Naive thymus-derived CD4-positive, alpha-beta T cell (primary cell): ENCODE measurements at regions of chr2 and their contacts with region 1.

Region 1: DNA sequence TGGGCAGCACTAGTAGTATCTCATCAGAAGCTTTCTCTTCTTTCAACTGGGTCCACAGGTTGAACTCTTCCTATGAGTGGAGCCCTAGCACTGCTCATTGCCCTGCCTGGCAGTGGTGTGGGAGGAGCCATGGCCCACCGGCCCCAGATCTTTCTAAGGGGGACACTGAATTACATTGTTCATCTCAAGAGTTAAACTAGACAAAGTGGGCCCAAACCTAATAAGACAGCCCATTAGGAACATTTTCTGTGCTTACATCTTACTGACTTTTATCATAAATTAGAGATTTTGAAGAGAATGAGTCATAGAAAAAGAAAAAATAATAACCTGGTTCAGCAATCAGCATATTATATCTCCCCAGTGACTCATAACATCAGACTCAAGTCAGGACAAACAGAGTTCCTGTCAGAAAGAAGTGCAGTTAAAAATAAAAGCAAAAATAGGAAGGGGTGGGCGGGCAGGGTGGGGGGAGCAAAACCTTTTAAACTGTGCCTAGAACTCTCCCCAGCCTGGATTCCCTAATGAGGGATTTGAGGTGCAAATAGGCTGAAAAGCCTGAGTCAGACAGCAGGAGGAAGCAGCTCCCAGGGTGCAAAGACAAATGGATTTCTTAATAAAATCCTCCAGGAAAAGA is 161.6 kb upstream of the TRIB2 start:
- DNase-seq: peak in 1 of 9 donors; percentile 32
- ATAC-seq: peak; percentile 27
- H3K4me3 ChIP-seq: no peak overlapping the region
- H3K4me3 Mint-ChIP-seq: peak overlapping the region in 7 of 10 donors; percentile 5 to 66 (median 26)
- H3K27ac ChIP-seq: no peak overlapping the region
- H3K27ac Mint-ChIP-seq: peak overlapping the region in 8 of 9 donors; percentile 36 to 89 (median 74)
- H3K4me1 ChIP-seq: peaks cover 8 to 26% of the 10 kb centered on the region in 2 donors
- H3K4me1 Mint-ChIP-seq: peaks cover 25 to 62% (median 43%) of the 10 kb centered on the region in 7 donors
- H3K27me3 ChIP-seq: no peaks in the 10 kb centered on the region
- H3K27me3 Mint-ChIP-seq: no peaks in the 10 kb centered on the region

Region 2: DNA sequence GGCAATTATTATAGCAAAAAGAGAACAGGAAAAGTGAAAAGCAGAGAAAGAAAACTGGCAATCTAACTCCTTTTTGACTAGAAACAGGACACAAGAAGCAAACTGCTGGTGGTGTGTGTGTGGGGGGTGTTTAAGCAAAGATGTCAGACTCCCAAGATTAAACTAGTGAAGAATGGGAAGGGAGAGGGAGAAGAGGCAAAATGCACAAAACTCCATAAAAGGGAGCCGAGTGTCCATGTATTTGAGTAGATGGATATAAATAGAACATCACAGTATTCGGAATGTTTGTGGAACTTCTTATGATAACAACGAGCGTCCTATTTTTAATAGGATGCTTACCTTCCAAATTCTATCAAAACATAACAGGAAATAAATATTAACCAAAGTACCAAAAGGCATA is 18.2 kb before region 1 on chr2:
- CTCF ChIA-PET with region 1: no interaction called
- POLR2A ChIA-PET with region 1: interaction called, 3 read pairs
- intact Hi-C with region 1: loop called in 1 of 2 experiments (anchors 2 kb)
- DNase-seq: no peak
- ATAC-seq: no peak
- H3K4me3 ChIP-seq: no peak overlapping the region
- H3K4me3 Mint-ChIP-seq: no peak overlapping the region
- H3K27ac ChIP-seq: no peak overlapping the region
- H3K27ac Mint-ChIP-seq: no peak overlapping the region
- H3K4me1 ChIP-seq: peaks cover 0 to 12% of the 10 kb centered on the region in 2 donors
- H3K4me1 Mint-ChIP-seq: peaks cover 12 to 53% (median 36%) of the 10 kb centered on the region in 7 donors
- H3K27me3 ChIP-seq: no peaks in the 10 kb centered on the region
- H3K27me3 Mint-ChIP-seq: peaks cover 0 to 7% (median 0%) of the 10 kb centered on the region in 5 donors

Region 3: GRCh38 chr2:13353083-13353482 is 798.0 kb after region 1 on chr2:
- CTCF ChIA-PET with region 1: no interaction called
- POLR2A ChIA-PET with region 1: no interaction called
- intact Hi-C with region 1: no loop called
- DNase-seq: no peak
- ATAC-seq: no peak
- H3K4me3 ChIP-seq: no peak overlapping the region
- H3K4me3 Mint-ChIP-seq: no peak overlapping the region
- H3K27ac ChIP-seq: no peak overlapping the region
- H3K27ac Mint-ChIP-seq: no peak overlapping the region
- H3K4me1 ChIP-seq: no peaks in the 10 kb centered on the region
- H3K4me1 Mint-ChIP-seq: no peaks in the 10 kb centered on the region
- H3K27me3 ChIP-seq: no peaks in the 10 kb centered on the region
- H3K27me3 Mint-ChIP-seq: peaks cover 0 to 7% (median 0%) of the 10 kb centered on the region in 5 donors